ENCODE measurements at regions of chr2 and their contacts with region 1.

Region 1: DNA sequence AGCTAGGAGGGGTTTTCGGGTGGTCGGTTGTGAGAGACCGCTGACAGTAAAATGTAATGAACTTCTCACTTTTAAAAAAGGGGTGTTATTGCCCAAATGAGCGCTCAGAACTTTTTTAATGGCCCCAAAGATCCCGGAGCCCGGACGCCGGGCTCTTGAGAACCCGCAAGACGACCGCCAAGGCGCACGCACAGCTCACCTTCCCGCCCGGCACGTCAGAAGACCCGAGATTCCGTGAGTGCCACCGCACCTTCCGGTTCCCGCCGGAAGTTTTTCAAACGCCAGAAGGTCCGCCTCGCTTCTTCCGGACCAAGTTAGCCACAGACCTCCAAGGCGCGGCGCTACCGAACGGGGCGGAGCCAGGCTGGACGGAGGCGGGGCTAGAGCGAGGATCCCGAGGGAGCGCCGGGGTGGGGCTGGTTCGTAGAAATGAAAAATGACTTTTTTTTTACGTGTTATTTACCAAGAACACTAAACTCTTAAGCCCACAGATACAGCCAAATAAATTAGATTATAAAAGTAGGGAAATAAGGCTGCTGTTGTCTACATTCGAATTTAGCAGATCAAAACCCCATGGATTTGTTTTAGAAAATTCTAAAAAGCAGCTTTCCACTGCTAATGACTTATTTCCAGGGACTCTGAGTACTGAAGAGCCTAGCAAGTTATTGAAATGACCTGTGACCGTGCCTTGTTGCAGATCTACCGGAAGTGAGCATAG is at the start of gene SRBD1:
- H3K4me3 Mint-ChIP-seq: peak within 1 kb of the TSS; percentile 96
- H3K27ac Mint-ChIP-seq: peak within 1 kb of the TSS; percentile 97
- H3K4me1 Mint-ChIP-seq: peaks cover 31% of the 10 kb centered on the region
- H3K27me3 Mint-ChIP-seq: no peaks in the 10 kb centered on the region

Region 2: DNA sequence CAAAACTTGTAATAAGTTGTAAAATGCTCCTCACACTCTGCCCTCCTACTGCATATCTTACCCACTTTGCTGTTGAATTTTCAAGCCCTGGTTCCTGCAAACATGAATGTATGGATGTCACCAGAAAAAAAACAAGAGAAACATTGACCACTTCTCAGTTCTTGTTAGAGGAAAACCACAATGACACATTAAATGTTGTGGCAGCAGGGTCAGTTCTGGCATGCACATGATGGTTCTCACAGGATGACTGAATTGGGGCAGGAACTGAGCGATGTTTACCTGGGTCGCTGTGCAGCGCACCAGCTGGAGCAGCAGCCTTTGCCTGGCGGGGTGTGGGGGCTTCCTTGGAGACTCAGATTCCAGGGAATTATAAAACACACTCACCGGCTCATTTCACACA is 26.3 kb after region 1 on chr2:
- intact Hi-C with region 1: loop called (anchors 2 kb)
- H3K4me3 Mint-ChIP-seq: no peak overlapping the region
- H3K27ac Mint-ChIP-seq: peak overlapping the region; percentile 55
- H3K4me1 Mint-ChIP-seq: peaks cover 19% of the 10 kb centered on the region
- H3K27me3 Mint-ChIP-seq: peaks cover 41% of the 10 kb centered on the region